GM12878 (cell line): ENCODE measurements at regions of chr11 and their contacts with region 1.

Region 1: GRCh38 chr11:60775420-60775961 is 9.6 kb upstream of the MS4A10 start:
- DNase-seq: peak; percentile 67
- ATAC-seq: peak; percentile 94
- H3K4me3 ChIP-seq: no peak overlapping the region
- H3K27ac ChIP-seq: no peak overlapping the region
- H3K4me1 ChIP-seq: peaks cover 11% of the 10 kb centered on the region
- H3K27me3 ChIP-seq: no peaks in the 10 kb centered on the region
- CTCF ChIP-seq: peak; percentile 86 to 94 (median 89)
- EP300 ChIP-seq: no peak
- POLR2A ChIP-seq: no peak
- RAD21 ChIP-seq: peak; percentile 81

Region 2: GRCh38 chr11:60700689-60701480 is 74.6 kb before region 1 on chr11:
- CTCF ChIA-PET with region 1: interaction called, 13 read pairs
- POLR2A ChIA-PET with region 1: no interaction called
- RAD21 ChIA-PET with region 1: interaction called, 5 read pairs
- SMC1A ChIA-PET with region 1: interaction called, 9 read pairs
- in situ Hi-C with region 1: no loop called
- intact Hi-C with region 1: loop called (anchors 1 kb)
- DNase-seq: no peak
- ATAC-seq: peak; percentile 87
- H3K4me3 ChIP-seq: no peak overlapping the region
- H3K27ac ChIP-seq: no peak overlapping the region
- H3K4me1 ChIP-seq: no peaks in the 10 kb centered on the region
- H3K27me3 ChIP-seq: no peaks in the 10 kb centered on the region
- CTCF ChIP-seq: peak; percentile 54 to 56 (median 55); a peak in 5 of 6 replicates
- EP300 ChIP-seq: no peak
- POLR2A ChIP-seq: no peak
- RAD21 ChIP-seq: peak; percentile 64

Region 3: GRCh38 chr11:60786811-60787567 is 11.5 kb after region 1 on chr11:
- CTCF ChIA-PET with region 1: interaction called, 21 read pairs
- POLR2A ChIA-PET with region 1: no interaction called
- RAD21 ChIA-PET with region 1: interaction called, 4 read pairs
- SMC1A ChIA-PET with region 1: interaction called, 3 read pairs
- in situ Hi-C with region 1: no loop called
- intact Hi-C with region 1: no loop called
- DNase-seq: no peak
- ATAC-seq: no peak
- H3K4me3 ChIP-seq: no peak overlapping the region
- H3K27ac ChIP-seq: no peak overlapping the region
- H3K4me1 ChIP-seq: 0 out of 2 replicates have a peak, but pooled peaks cover 1% of the 10 kb centered on the region
- H3K27me3 ChIP-seq: no peaks in the 10 kb centered on the region; a peak in 1 of 4 replicates
- CTCF ChIP-seq: no peak
- EP300 ChIP-seq: no peak
- POLR2A ChIP-seq: no peak
- RAD21 ChIP-seq: no peak

Region 4: DNA sequence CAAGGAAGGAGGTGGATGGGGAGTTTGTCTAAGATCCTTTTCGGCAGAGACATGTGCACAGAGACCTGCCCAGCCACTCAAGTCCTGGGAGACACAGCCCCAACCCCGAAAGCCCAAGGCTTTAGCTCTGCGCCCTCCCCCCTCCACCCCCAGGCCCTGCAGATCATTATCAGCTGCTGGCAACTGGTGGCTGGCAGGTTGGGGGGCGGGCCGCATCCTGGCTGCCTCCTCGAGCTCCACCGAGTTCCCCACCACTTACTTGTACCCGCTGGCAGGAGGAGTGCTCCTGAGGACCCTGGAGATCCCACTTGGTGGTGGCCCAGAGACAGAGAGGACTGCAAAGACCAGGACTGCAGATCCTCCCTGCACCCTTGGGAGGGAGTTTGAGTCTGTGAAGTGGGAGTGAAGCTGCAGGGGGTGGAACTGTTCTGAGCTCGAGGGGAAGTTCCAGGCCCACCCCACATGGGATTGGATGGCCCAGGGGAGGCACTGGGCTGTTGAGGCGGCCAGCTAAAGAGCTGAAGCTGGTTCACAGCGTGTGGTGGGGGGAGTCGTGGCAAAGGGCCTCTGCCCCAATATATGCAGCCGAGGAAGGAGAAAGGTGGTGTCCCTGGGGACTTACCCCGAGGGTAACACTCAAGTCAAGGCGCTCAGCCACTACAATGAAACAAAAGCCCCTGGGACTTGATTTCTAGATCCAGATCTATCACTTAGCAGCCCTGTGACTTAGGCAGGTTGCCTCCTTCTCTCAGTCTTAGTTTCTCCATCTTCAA is 46.5 kb after region 1 on chr11:
- CTCF ChIA-PET with region 1: interaction called, 31 read pairs
- POLR2A ChIA-PET with region 1: interaction called, 8 read pairs
- RAD21 ChIA-PET with region 1: interaction called, 31 read pairs
- SMC1A ChIA-PET with region 1: interaction called, 13 read pairs
- in situ Hi-C with region 1: no loop called
- intact Hi-C with region 1: loop called (anchors 1 kb)
- DNase-seq: peak; percentile 19
- ATAC-seq: peak; percentile 84
- H3K4me3 ChIP-seq: no peak overlapping the region
- H3K27ac ChIP-seq: no peak overlapping the region
- H3K4me1 ChIP-seq: no peaks in the 10 kb centered on the region
- H3K27me3 ChIP-seq: no peaks in the 10 kb centered on the region; a peak in 1 of 4 replicates
- CTCF ChIP-seq: no peak
- EP300 ChIP-seq: 0 out of 4 replicates have a peak, but pooled peaks of 1 of the 2 experiments have one; percentile 29
- POLR2A ChIP-seq: no peak
- RAD21 ChIP-seq: no peak

Region 5: DNA sequence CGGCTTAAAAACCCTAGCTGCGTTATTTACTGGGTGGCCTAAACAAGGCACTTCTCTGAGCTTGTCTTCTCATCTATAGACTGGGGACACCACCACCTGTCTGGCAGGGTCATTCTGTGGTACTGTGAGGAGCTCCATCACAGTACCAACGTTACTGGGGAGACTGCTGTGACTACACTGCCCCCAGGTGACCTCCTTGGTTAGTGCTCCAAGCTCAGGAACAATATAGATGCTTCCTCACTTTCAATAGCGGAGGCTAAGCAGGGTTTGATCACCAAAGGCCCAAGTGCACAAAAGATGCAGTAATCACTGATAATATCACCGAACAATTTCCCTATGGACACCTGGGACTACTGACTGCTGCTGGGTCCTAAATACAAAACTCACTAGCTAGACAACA is 112.1 kb after region 1 on chr11:
- CTCF ChIA-PET with region 1: interaction called, 30 read pairs
- POLR2A ChIA-PET with region 1: interaction called, 5 read pairs
- RAD21 ChIA-PET with region 1: interaction called, 19 read pairs
- SMC1A ChIA-PET with region 1: interaction called, 46 read pairs
- in situ Hi-C with region 1: loop called (anchors 5 kb)
- intact Hi-C with region 1: no loop called
- DNase-seq: no peak
- ATAC-seq: peak; percentile 93
- H3K4me3 ChIP-seq: no peak overlapping the region
- H3K27ac ChIP-seq: no peak overlapping the region
- H3K4me1 ChIP-seq: no peaks in the 10 kb centered on the region
- H3K27me3 ChIP-seq: no peaks in the 10 kb centered on the region
- CTCF ChIP-seq: peak; percentile 47 to 61 (median 58); a peak in 5 of 6 replicates
- EP300 ChIP-seq: no peak
- POLR2A ChIP-seq: no peak
- RAD21 ChIP-seq: peak; percentile 73

Region 6: GRCh38 chr11:60899046-60899936 is 123.8 kb after region 1 on chr11:
- CTCF ChIA-PET with region 1: interaction called, 27 read pairs
- POLR2A ChIA-PET with region 1: interaction called, 3 read pairs
- RAD21 ChIA-PET with region 1: no interaction called
- SMC1A ChIA-PET with region 1: interaction called, 7 read pairs
- in situ Hi-C with region 1: loop called (anchors 5 kb)
- intact Hi-C with region 1: loop called (anchors 1 kb)
- DNase-seq: no peak
- ATAC-seq: peak; percentile 93
- H3K4me3 ChIP-seq: no peak overlapping the region
- H3K27ac ChIP-seq: no peak overlapping the region
- H3K4me1 ChIP-seq: no peaks in the 10 kb centered on the region; the same call in 1 of the 2 replicates
- H3K27me3 ChIP-seq: no peaks in the 10 kb centered on the region
- CTCF ChIP-seq: peak; percentile 85 to 98 (median 94)
- EP300 ChIP-seq: no peak
- POLR2A ChIP-seq: no peak
- RAD21 ChIP-seq: peak; percentile 64

Region 7: DNA sequence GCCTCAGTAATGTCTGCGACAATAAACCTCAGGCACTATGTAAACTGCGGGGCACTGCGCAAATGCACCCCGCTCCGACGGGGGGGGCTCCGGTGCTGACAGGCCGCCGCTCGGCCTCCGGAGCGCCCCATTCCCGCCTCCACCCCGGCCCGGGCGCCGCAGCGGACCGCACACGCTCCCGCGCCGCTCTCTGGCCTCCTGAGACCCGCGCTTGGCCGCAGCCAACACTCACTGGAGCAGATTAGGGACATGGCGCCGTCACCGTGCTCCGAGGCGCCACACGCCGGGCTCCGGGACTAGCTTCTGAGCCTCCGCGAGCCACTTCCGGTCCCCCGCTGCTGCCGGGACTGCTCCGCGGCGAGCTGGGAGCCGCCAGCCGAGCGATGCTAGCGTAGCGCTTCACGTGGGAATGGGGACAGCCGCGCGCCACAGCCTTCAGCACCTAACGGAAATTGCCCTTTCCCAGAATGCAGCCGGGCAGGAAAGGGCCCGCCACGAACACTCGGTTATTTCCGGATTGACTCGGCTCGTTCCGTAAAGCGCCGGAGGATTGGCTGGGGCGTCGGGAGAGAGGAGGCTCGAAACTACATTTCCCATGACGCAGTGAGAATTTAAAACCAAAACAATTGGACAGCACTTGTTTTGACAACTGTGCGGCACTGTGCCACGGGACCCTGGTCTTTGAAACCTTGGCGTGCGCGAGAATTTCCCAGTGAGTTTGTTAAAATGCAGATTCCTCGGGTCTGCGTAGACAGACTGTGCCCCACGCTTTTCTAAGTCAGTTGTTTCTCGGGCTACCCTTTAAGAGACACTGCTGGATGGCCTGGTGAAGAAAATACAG is 130.9 kb after region 1 on chr11 and contains the start of gene PRPF19:
- CTCF ChIA-PET with region 1: interaction called, 18 read pairs
- POLR2A ChIA-PET with region 1: interaction called, 3 read pairs
- RAD21 ChIA-PET with region 1: no interaction called
- SMC1A ChIA-PET with region 1: interaction called, 4 read pairs
- in situ Hi-C with region 1: no loop called
- intact Hi-C with region 1: no loop called
- DNase-seq: peak; percentile 93
- ATAC-seq: peak; percentile 87
- H3K4me3 ChIP-seq: peak within 1 kb of the TSS; percentile 86
- H3K27ac ChIP-seq: peak within 1 kb of the TSS; percentile 89
- H3K4me1 ChIP-seq: peaks cover 36% of the 10 kb centered on the region
- H3K27me3 ChIP-seq: no peaks in the 10 kb centered on the region
- CTCF ChIP-seq: no peak
- EP300 ChIP-seq: 0 out of 4 replicates have a peak, but pooled peaks of 1 of the 2 experiments have one; percentile 34
- POLR2A ChIP-seq: peak; percentile 99
- RAD21 ChIP-seq: no peak
- polyA plus RNA-seq, gene PRPF19: 8.7 to 27.7 TPM

Region 8: DNA sequence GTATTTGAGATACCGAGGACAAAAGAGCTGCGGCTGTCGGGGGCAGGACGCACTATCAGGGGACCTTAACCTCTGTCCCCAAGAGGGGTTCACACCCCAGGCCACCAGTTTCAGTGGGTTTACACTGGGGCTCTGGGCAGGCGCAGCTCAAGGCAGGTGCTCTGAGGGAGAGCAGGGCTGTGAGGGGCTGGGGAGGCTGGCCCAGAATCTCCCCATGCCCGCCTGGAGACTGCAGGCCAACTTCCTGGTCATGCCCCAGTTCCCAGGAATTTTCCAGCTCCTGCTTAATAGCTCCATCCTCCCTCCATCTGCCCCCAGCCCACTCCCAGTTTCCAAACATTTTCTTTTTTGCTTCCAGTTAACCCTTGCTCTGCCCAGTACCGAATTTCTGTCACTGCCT is 420.2 kb after region 1 on chr11:
- CTCF ChIA-PET with region 1: no interaction called
- POLR2A ChIA-PET with region 1: no interaction called
- RAD21 ChIA-PET with region 1: no interaction called
- SMC1A ChIA-PET with region 1: no interaction called
- in situ Hi-C with region 1: no loop called
- intact Hi-C with region 1: no loop called
- DNase-seq: no peak
- ATAC-seq: no peak
- H3K4me3 ChIP-seq: no peak overlapping the region
- H3K27ac ChIP-seq: no peak overlapping the region
- H3K4me1 ChIP-seq: no peaks in the 10 kb centered on the region
- H3K27me3 ChIP-seq: no peaks in the 10 kb centered on the region
- CTCF ChIP-seq: no peak
- EP300 ChIP-seq: no peak
- POLR2A ChIP-seq: no peak
- RAD21 ChIP-seq: no peak